ENCODE measurements at regions of chr20 and their contacts with region 1.

Region 1: DNA sequence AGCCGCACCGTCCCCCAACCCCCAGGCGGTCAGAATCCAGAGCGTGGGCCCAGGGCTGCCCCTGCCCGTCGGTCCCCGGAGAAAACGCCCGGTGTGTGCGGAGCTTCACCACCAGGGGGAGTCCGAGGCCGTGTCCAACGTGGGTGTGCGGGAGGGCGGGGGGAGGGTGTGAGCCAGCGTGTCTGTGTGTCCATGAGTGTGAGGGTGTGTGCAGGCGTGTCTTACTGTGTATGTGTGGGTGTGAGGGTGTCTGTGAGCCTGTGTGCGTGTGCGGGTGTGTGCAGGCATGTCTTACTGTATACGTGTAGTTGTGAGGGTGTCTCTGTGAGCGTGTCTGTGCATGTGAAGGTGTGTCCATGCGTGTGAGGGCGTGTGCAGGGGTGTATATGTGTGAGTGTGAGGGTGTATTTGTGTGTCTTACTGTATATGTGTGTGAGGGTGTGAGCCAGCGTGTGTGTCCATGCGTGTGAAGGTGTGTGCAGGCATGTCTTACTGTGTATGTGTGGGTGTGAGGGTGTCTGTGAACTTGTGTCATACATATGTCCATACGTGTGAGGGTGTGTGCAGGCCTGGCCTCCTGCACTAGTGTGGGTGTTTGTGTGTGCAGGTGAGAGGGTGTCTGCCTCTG is 24.6 kb upstream of the GATA5 start:
- DNase-seq: peak; percentile 92

Region 2: GRCh38 chr20:62302341-62303058 is 197.9 kb before region 1 on chr20 and contains the start of gene ADRM1:
- intact Hi-C with region 1: loop called (anchors 5 kb)
- DNase-seq: peak; percentile 98
- total RNA-seq, gene ADRM1: 79.9 TPM

Region 3: GRCh38 chr20:62407221-62407992 is 92.9 kb before region 1 on chr20 and contains the start of gene CABLES2:
- intact Hi-C with region 1: loop called (anchors 1 kb)
- DNase-seq: peak; percentile 97
- total RNA-seq, gene CABLES2: 10.7 TPM

Region 4: GRCh38 chr20:62576815-62577506 is 76.6 kb after region 1 on chr20:
- intact Hi-C with region 1: loop called (anchors 5 kb)
- DNase-seq: no peak

Region 5: GRCh38 chr20:62616728-62617621 is 116.6 kb after region 1 on chr20:
- intact Hi-C with region 1: loop called (anchors 1 kb)
- DNase-seq: peak; percentile 92

Region 6: DNA sequence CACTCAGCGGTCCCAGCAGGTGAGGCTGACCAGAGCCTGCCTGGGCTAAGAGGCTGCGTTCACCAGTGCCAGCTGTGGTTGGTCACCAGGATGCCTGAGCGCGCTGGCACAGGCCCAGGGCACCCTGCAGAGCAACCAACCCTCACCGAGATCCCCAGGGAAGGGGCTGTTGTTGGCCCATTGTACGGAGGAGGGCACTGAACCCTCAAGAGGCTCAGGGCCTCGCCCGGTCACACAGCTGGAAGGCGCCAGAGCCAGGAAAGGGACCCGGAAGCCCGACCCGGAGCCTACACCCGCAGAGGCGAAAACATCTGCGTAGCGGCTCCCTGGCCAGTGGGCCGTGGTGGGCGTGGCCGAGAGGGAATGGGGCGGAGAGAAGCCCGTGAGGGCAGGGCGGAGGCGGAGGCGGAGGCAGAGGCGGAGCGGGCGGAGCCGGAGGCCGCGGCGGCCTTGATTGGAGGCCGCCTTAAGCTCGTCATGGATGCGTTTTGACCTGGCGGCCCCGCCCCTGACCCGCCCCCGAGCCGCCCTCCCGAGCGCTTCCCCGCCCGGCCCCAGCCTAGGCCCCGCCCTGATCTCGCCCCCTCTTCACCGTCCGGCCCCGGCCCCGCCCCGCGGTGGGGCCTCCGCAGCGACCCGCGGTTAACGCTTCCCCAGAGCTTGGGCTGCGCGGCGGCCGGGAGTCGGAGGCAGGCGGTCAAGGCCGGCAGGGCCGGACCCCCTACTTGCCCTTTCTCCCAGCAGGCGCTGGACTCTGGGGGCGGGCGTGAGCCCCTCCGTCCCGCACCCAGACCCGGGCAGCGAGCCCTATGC is 293.8 kb after region 1 on chr20:
- intact Hi-C with region 1: loop called (anchors 5 kb)
- DNase-seq: peak; percentile 99

Measured in cardiac septum (tissue), 1 donor.